ENCODE measurements at regions of chr13 and their contacts with region 1.

Region 1: DNA sequence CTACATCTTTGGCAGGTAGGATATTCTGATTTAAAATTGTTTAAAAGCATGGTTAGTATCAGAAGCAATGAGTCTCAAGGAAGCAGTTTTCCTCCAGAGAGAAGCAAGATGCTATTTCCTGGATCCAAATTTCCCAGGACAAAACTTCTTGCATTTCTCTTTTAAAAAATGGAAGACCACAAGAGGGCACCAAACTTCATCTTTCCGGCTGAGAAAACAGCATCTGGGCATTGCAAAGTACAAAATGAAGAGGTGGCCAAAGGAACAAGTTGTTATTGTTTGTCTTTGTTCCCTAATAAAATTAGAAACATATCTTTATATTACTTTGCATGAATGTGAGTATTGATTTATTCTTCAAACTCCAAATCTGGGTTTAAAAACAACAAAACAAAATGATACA is 60.0 kb upstream of the LRCH1 start:
- DNase-seq: no peak
- ATAC-seq: no peak

Region 2: DNA sequence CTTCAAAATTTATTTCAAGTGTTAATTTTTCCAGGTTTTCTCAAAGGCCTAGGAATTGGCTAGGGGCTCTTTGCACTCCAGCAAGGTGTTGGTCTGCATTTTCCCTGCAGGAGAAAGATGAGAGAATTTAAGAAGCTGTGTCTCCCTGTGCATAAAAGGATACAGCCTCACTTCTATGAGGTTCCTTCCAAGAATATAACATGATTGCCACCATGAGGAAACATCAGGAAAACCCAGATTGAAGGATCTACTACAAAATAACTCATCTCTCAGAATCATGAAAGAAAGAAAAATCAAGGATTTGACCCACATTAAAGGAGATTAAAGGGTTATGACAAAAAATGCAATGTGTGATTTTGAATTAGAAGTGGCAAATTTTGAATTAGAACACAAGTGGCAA is 175.8 kb before region 1 on chr13:
- intact Hi-C with region 1: no loop called
- DNase-seq: no peak
- ATAC-seq: no peak

Region 3: DNA sequence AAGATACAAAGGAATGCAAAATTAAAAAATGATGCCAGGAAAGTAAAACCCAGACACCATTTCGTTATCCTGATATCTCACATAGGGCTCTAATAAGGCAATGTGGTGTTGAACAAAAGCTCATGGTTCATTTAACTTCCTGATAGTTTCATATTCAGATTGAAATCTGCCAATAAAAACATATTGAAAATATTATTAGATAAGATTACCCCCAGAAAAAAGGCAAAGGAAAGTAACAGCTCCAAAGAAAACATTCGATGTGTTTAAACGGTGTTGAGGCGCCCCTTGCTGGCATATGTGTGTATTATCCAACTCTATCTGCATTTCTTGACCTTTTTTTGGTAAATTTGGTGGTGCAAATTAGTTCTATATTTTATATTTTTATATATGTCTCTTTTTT is 228.1 kb after region 1 on chr13:
- intact Hi-C with region 1: loop called (anchors 2 to 5 kb)
- DNase-seq: peak; percentile 54
- ATAC-seq: peak; percentile 56 to 57